ACHN (cell line): ENCODE measurements at regions of chr15 and their contacts with region 1.

Region 1: GRCh38 chr15:33737687-33738601 is 230.4 kb upstream of the CHRM5 start:
- DNase-seq: peak; percentile 51

Region 2: GRCh38 chr15:33834892-33835743 is 97.2 kb after region 1 on chr15:
- in situ Hi-C with region 1: no loop called
- DNase-seq: no peak

Region 3: GRCh38 chr15:33994005-33994615 is 256.2 kb after region 1 on chr15:
- in situ Hi-C with region 1: loop called (anchors 25 kb)
- DNase-seq: peak; percentile 45